Activated CD4-positive, alpha-beta T cell treated with anti-CD3 and anti-CD28 coated beads for 36 hours (primary cell): ENCODE measurements at regions of chr16 and their contacts with region 1.

Region 1: GRCh38 chr16:70523076-70523742 is at the start of gene COG4:
- DNase-seq: peak; percentile 96
- ATAC-seq: peak; percentile 79
- H3K4me3 Mint-ChIP-seq: peak within 1 kb of the TSS; percentile 96
- H3K27ac Mint-ChIP-seq: peak within 1 kb of the TSS; percentile 98
- H3K4me1 Mint-ChIP-seq: peaks cover 46% of the 10 kb centered on the region
- H3K27me3 Mint-ChIP-seq: no peaks in the 10 kb centered on the region
- total RNA-seq, gene COG4: 33.5 to 37.6 TPM

Region 2: DNA sequence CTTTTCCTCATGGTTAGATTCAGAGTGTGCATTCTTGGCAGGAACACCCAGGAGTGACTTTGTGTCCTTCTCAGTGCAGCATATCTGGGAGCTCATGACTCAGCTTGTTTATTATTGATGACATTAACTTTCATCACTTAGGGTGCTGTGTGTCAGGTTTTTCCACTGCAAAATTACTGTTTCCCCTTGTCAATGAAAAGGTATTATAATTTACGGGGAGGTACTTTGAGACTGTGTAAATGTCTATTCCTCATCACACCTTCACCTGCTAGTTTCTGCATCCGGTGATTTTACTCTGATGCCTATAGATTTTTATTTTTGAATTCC is 710.6 kb before region 1 on chr16:
- CTCF ChIA-PET with region 1: no interaction called
- POLR2A ChIA-PET with region 1: no interaction called
- intact Hi-C with region 1: no loop called
- DNase-seq: no peak
- ATAC-seq: no peak
- H3K4me3 Mint-ChIP-seq: no peak overlapping the region
- H3K27ac Mint-ChIP-seq: no peak overlapping the region
- H3K4me1 Mint-ChIP-seq: no peaks in the 10 kb centered on the region
- H3K27me3 Mint-ChIP-seq: no peaks in the 10 kb centered on the region

Region 3: DNA sequence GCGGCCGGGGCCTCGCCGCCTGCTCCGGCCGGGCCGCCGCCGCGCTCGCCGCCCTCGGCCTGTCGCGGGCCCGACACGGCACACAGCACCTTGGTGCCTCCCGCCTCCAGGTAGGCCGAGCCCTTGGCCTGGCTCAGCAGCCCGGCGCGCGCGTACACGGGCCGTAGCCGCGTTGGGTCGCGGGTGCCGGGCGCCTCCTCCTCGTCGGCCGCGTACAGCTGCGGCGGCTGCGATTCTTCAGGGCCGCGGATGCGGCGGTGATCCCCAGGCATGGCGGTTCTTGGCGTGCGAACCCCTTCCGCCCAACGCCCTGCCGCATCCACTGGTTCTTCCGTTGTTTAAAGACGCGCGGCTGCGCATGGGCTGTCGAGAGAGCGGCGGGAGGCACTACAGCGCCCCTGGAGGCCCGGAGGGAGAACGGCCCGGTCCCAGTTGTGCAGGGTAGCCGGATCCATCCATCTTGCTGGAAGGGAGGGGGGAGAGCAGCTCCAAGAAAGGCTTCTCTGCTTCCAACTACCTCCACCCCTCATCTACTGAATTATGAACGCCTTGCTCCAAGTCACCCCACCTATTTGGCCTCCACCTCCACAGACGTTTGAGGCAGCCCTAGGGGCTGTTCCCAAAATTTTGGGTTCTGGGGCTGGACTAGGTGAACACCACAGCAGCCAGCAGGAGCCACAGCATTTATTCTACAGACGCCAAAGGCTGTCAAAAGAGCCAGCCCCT is 271.4 kb before region 1 on chr16 and contains the start of gene EXOSC6:
- CTCF ChIA-PET with region 1: no interaction called
- POLR2A ChIA-PET with region 1: interaction called, 5 read pairs
- intact Hi-C with region 1: loop called (anchors 1 to 10 kb)
- DNase-seq: peak; percentile 96
- ATAC-seq: peak; percentile 94
- H3K4me3 Mint-ChIP-seq: peak within 1 kb of the TSS; percentile 85
- H3K27ac Mint-ChIP-seq: peak within 1 kb of the TSS; percentile 84
- H3K4me1 Mint-ChIP-seq: peaks cover 16% of the 10 kb centered on the region
- H3K27me3 Mint-ChIP-seq: no peaks in the 10 kb centered on the region
- total RNA-seq, gene EXOSC6: 18.7 to 23.5 TPM

Region 4: GRCh38 chr16:70348991-70349390 is 174.2 kb before region 1 on chr16:
- CTCF ChIA-PET with region 1: interaction called, 5 read pairs
- POLR2A ChIA-PET with region 1: interaction called, 19 read pairs
- intact Hi-C with region 1: loop called (anchors 1 kb)
- DNase-seq: no peak
- ATAC-seq: no peak
- H3K4me3 Mint-ChIP-seq: no peak overlapping the region
- H3K27ac Mint-ChIP-seq: no peak overlapping the region
- H3K4me1 Mint-ChIP-seq: peaks cover 36% of the 10 kb centered on the region
- H3K27me3 Mint-ChIP-seq: no peaks in the 10 kb centered on the region

Region 5: DNA sequence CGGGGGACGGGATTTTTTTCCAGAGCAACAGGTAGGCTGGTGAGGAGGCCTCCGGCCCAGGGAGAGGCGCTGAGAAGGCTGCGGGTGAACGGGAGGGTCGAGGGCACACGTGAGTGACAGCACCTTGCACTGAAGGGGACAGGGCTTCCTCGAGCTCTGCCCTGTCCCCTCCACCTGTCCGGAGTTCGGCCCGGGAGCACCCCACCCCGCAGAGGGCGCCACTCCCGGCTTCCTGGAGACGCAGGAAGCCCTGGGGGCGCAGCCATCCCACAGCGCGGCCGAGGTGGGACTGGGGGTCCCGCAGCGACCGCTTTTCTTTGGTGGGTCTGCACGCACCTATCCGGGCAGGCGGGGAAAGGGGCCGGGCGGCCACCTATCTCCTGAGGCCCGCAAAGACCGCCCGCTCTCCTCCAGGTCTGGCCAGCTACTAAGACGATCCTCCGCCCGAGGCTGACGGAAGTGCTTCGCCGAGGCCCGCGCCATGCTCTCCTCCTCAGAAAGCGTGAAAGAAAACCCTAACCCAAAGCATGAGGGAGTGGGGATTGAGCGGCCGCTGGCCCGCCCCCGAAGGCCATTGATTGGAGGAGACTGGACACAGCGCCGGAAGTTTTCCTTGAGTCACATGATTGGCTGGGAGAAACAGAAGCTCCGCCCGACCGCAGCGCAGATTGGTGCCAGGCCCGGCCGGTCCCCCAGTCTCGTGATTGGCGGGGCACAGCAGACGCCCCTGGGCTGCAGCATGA is 142.2 kb before region 1 on chr16:
- CTCF ChIA-PET with region 1: interaction called, 4 read pairs
- POLR2A ChIA-PET with region 1: interaction called, 17 read pairs
- intact Hi-C with region 1: loop called (anchors 1 kb)
- DNase-seq: peak; percentile 98
- ATAC-seq: peak; percentile 93
- H3K4me3 Mint-ChIP-seq: peak overlapping the region; percentile 86
- H3K27ac Mint-ChIP-seq: peak overlapping the region; percentile 91
- H3K4me1 Mint-ChIP-seq: peaks cover 12% of the 10 kb centered on the region
- H3K27me3 Mint-ChIP-seq: no peaks in the 10 kb centered on the region

Region 6: GRCh38 chr16:70454222-70455034 is 68.8 kb before region 1 on chr16 and contains the start of gene FCSK:
- CTCF ChIA-PET with region 1: no interaction called
- POLR2A ChIA-PET with region 1: no interaction called
- intact Hi-C with region 1: loop called in 1 of 2 experiments (anchors 1 kb)
- DNase-seq: peak; percentile 79
- ATAC-seq: peak; percentile 94
- H3K4me3 Mint-ChIP-seq: peak within 1 kb of the TSS; percentile 85
- H3K27ac Mint-ChIP-seq: peak within 1 kb of the TSS; percentile 88
- H3K4me1 Mint-ChIP-seq: peaks cover 16% of the 10 kb centered on the region
- H3K27me3 Mint-ChIP-seq: no peaks in the 10 kb centered on the region
- total RNA-seq, gene FCSK: 10.3 to 13.4 TPM

Region 7: DNA sequence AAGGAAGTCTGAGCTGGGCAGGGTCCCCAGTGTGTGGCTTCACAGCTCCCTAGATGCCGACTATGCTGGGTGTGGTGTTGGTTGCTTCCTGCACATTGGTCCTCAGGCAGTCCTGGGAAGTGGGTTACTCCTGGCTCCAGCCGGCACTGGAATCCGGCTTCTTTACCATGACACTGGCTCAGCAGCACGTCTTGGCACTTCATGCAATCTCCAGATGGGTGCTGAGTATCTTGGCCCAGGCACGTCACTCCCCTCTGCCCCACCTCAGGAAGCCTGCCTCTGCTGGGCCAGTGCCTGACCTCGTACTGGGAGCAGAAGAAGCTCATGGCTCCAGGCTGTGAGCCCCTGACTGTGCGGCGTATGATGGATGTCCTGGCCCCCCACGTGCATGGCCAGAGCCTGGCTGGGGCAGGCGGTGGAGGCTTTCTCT is 44.3 kb before region 1 on chr16:
- CTCF ChIA-PET with region 1: no interaction called
- POLR2A ChIA-PET with region 1: interaction called, 6 read pairs
- intact Hi-C with region 1: loop called (anchors 1 to 2 kb)
- DNase-seq: no peak
- ATAC-seq: no peak
- H3K4me3 Mint-ChIP-seq: no peak overlapping the region
- H3K27ac Mint-ChIP-seq: peak overlapping the region; percentile 19
- H3K4me1 Mint-ChIP-seq: peaks cover 26% of the 10 kb centered on the region
- H3K27me3 Mint-ChIP-seq: no peaks in the 10 kb centered on the region

Region 8: DNA sequence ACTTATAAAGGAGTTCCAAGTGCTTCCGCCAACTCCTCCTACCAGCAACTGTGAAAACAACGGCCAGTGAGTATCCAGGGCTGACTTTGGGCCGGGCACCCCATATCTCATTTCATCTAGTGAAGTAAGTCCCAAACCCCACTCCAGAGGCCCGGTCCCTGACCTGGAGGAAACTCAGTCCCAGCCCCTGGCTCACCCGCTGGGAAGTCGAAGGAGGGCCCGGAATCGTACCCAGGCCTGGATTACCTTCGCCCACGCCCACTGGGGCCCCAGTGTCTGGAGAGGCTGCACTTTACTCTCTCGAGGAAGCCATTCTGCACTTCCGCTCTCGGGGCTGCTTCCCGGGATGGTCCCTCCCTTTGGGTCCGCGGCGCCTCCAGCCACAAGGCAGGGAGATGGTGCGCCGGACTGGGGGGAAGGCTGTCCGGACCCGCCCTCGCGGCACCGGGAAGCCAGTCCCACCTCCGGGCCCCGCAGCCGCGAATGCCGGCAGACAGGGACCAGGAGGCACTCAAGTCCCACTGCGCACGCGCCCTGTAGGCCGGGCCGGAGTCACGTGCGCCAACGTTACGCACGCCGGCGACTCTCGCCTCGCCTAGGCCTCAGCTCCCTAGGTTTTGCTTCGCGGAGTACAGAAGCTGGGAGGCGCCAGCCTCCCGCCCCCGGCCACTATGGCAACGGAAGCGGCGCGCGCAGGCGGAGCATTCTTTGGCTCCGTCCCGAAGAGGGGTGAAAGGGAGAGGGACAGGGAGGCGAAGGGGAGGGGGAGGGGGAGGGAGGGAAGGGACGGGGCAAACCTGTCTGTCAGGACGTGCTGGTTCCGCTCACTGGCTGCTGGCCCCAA is 765.9 kb after region 1 on chr16 and contains the start of gene CMTR2:
- CTCF ChIA-PET with region 1: no interaction called
- POLR2A ChIA-PET with region 1: no interaction called
- intact Hi-C with region 1: loop called in 1 of 2 experiments (anchors 10 kb)
- DNase-seq: peak; percentile 95
- ATAC-seq: peak; percentile 97
- H3K4me3 Mint-ChIP-seq: peak within 1 kb of the TSS; percentile 83
- H3K27ac Mint-ChIP-seq: peak within 1 kb of the TSS; percentile 90
- H3K4me1 Mint-ChIP-seq: peaks cover 15% of the 10 kb centered on the region
- H3K27me3 Mint-ChIP-seq: peaks cover 16% of the 10 kb centered on the region
- total RNA-seq, gene CMTR2: 15.8 to 16.5 TPM